H1 (cell line): ENCODE measurements at regions of chr7 and their contacts with region 1.

Region 1: DNA sequence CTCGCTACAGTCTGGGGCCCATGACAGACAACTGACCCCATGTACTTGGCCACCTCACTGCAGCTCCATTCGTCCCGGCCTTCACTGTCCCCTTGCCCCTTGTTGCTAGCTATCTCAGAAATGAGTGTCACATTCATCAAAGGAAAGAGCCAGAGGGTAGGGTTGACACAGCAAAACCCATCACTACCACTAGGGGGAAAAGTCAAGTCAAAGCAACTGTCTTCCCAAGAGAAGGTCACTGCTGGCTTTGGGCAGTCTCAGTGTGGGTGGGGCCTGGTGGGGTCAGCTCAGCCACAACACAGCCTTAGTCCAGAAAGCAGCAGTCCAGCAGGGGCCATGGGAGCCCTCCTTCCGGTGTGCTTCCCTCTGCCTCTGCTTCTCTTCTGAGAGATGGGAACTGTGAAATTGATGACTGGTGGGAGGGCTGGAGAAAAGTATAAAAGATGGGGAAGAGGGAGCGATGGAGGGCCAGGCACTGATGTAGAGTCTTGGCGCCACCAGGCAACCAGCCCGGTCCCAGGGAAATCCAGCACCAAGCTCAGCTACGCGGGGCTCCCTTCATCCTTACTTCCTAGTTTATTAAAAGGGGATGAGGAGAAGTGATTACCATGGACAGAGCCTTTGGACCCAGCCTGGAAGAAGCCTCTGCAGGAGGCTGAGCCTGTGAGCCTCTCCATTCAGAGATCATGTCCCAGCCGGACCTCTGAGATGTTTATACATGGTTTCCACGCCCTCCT is 58.0 kb downstream of the PLXNA4 start:
- DNase-seq: peak in 1 of 2 experiments; percentile 76
- H3K4me3 ChIP-seq: no peak overlapping the region
- H3K27ac ChIP-seq: no peak overlapping the region
- H3K4me1 ChIP-seq: peaks cover 0 to 4% (median 0%) of the 10 kb centered on the region in 4 experiments; a peak in 2 of 7 replicates
- H3K27me3 ChIP-seq: no peaks in the 10 kb centered on the region
- CTCF ChIP-seq: peak; percentile 37 to 84 (median 59)
- EP300 ChIP-seq: no peak
- POLR2A ChIP-seq: no peak
- RAD21 ChIP-seq: peak; percentile 58 to 73

Region 2: GRCh38 chr7:132239422-132239994 is 278.8 kb before region 1 on chr7:
- CTCF ChIA-PET with region 1: no interaction called
- POLR2A ChIA-PET with region 1: no interaction called
- DNase-seq: no peak
- H3K4me3 ChIP-seq: no peak overlapping the region
- H3K27ac ChIP-seq: no peak overlapping the region
- H3K4me1 ChIP-seq: peaks cover 0 to 3% (median 1%) of the 10 kb centered on the region in 4 experiments; a peak in 3 of 7 replicates
- H3K27me3 ChIP-seq: no peaks in the 10 kb centered on the region
- CTCF ChIP-seq: peak; percentile 22 to 64 (median 33); a peak in 3 of 4 replicates
- EP300 ChIP-seq: no peak
- POLR2A ChIP-seq: no peak
- RAD21 ChIP-seq: peak; percentile 33 to 54; a peak in 3 of 4 replicates

Region 3: GRCh38 chr7:132500727-132501440 is 17.4 kb before region 1 on chr7:
- CTCF ChIA-PET with region 1: interaction called, 10 read pairs
- POLR2A ChIA-PET with region 1: no interaction called
- DNase-seq: peak in 1 of 2 experiments; percentile 54
- H3K4me3 ChIP-seq: no peak overlapping the region
- H3K27ac ChIP-seq: no peak overlapping the region
- H3K4me1 ChIP-seq: no peaks in the 10 kb centered on the region
- H3K27me3 ChIP-seq: no peaks in the 10 kb centered on the region; a peak in 1 of 7 replicates
- CTCF ChIP-seq: peak; percentile 64 to 76 (median 68)
- EP300 ChIP-seq: no peak
- POLR2A ChIP-seq: no peak
- RAD21 ChIP-seq: peak; percentile 67 to 82

Region 4: GRCh38 chr7:132557489-132558044 is 39.3 kb after region 1 on chr7:
- CTCF ChIA-PET with region 1: interaction called, 15 read pairs
- POLR2A ChIA-PET with region 1: no interaction called
- DNase-seq: no peak
- H3K4me3 ChIP-seq: no peak overlapping the region
- H3K27ac ChIP-seq: no peak overlapping the region
- H3K4me1 ChIP-seq: no peaks in the 10 kb centered on the region
- H3K27me3 ChIP-seq: peaks cover 0 to 18% (median 11%) of the 10 kb centered on the region in 4 experiments; a peak in 6 of 7 replicates
- CTCF ChIP-seq: peak in 2 of 3 experiments; percentile 31 to 34; a peak in 2 of 4 replicates
- EP300 ChIP-seq: no peak
- POLR2A ChIP-seq: no peak
- RAD21 ChIP-seq: peak; percentile 51 to 72

Region 5: DNA sequence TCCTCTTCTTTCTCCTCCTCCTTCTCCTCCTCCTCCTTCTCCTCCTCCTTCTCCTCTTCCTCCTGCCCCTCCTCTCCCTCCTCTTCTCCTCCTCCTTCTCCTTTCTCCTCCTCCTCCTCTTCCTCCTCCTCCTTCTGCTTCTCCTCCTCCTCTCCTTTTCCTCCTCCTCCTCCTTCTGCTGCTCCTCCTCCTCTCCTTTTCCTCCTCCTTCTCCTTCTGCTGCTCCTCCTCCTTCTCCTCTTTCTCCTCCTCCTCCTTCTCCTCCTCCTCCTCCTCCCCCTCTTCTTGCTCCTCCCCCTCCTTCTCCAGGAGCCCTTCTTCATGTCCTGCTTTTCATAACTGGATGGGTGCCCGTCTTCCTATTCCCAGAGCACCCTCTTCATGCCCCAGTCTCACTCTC is 45.8 kb after region 1 on chr7:
- CTCF ChIA-PET with region 1: interaction called, 12 read pairs
- POLR2A ChIA-PET with region 1: no interaction called
- DNase-seq: no peak
- H3K4me3 ChIP-seq: no peak overlapping the region
- H3K27ac ChIP-seq: no peak overlapping the region
- H3K4me1 ChIP-seq: peaks cover 0 to 7% (median 1%) of the 10 kb centered on the region in 4 experiments; a peak in 1 of 7 replicates
- H3K27me3 ChIP-seq: peaks cover 0 to 27% (median 13%) of the 10 kb centered on the region in 4 experiments; a peak in 6 of 7 replicates
- CTCF ChIP-seq: no peak
- EP300 ChIP-seq: no peak
- POLR2A ChIP-seq: no peak
- RAD21 ChIP-seq: no peak

Region 6: DNA sequence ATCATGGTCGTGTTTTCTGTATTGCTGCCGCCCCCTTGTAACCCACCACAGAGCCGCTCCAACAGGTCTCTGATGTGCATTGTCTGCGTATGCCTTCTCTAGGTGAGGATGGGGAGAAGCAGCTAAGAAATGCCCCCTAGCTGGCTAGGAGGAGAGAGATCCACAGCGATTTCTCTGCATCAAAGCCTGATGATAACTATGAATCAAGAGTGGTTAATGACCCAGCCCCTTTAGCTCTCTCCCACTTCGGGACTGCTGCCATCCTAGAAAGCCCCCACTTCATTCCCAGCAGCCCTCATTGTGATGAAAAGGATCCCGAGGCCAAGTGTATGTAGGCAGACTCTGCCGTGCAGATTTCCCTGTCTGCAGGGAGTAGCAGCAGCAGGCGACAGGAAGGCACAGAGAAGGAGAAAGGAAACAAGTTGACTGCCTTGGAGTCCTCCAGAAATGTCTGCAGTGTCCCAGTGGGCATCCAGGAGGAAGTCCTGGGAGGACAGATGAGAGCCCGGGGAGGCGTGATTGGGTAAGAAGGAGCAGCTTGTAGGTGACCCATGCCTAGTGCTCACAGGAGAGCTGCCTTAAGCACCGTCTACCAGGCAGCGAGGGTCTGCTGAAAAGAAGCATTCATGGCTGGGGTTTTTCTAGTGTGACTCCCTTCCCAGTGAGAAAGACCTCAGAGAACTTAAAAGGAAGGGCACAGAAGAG is 55.1 kb after region 1 on chr7:
- CTCF ChIA-PET with region 1: interaction called, 26 read pairs
- POLR2A ChIA-PET with region 1: no interaction called
- DNase-seq: no peak
- H3K4me3 ChIP-seq: peak overlapping the region in 3 of 4 experiments; percentile 25 to 67 (median 34); a peak in 5 of 8 replicates
- H3K27ac ChIP-seq: no peak overlapping the region
- H3K4me1 ChIP-seq: peaks cover 12 to 46% (median 25%) of the 10 kb centered on the region in 4 experiments
- H3K27me3 ChIP-seq: peaks cover 58 to 78% (median 69%) of the 10 kb centered on the region in 4 experiments
- CTCF ChIP-seq: no peak
- EP300 ChIP-seq: no peak
- POLR2A ChIP-seq: no peak
- RAD21 ChIP-seq: no peak

Region 7: DNA sequence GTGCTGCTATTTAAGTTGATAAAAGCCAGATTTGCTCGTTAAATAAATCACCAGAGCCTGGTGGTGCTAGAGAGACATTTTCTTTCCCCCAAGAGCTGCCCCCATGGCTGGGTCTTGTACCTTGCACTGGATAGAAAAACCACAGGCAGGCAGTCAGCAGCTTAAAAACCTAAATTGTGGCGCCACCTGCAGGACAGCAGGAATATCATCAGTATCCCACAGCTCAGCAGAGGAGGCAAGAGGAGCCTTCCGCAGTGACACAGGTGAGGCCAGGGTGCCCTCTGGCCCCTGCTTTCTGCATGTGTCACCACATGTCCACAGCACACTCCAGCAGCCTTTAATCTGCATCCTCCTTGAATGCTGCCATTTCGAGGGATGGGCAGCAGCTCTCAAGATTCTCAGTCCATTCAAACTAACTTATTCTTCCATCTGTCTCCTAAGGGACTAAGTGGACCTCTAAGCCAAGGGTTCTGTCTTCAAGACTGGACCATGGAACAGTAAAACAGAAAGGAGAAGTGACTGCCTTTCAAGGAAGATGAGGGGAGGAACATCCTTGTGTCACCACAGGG is 62.5 kb after region 1 on chr7:
- CTCF ChIA-PET with region 1: interaction called, 26 read pairs
- POLR2A ChIA-PET with region 1: no interaction called
- DNase-seq: peak in 1 of 2 experiments; percentile 86
- H3K4me3 ChIP-seq: no peak overlapping the region
- H3K27ac ChIP-seq: no peak overlapping the region
- H3K4me1 ChIP-seq: peaks cover 0 to 9% (median 6%) of the 10 kb centered on the region in 4 experiments; a peak in 5 of 7 replicates
- H3K27me3 ChIP-seq: peaks cover 26 to 34% (median 29%) of the 10 kb centered on the region in 4 experiments
- CTCF ChIP-seq: peak; percentile 78 to 90 (median 86)
- EP300 ChIP-seq: no peak
- POLR2A ChIP-seq: no peak
- RAD21 ChIP-seq: peak; percentile 90 to 95